ENCODE measurements at regions of chr9 and their contacts with region 1.

Region 1: DNA sequence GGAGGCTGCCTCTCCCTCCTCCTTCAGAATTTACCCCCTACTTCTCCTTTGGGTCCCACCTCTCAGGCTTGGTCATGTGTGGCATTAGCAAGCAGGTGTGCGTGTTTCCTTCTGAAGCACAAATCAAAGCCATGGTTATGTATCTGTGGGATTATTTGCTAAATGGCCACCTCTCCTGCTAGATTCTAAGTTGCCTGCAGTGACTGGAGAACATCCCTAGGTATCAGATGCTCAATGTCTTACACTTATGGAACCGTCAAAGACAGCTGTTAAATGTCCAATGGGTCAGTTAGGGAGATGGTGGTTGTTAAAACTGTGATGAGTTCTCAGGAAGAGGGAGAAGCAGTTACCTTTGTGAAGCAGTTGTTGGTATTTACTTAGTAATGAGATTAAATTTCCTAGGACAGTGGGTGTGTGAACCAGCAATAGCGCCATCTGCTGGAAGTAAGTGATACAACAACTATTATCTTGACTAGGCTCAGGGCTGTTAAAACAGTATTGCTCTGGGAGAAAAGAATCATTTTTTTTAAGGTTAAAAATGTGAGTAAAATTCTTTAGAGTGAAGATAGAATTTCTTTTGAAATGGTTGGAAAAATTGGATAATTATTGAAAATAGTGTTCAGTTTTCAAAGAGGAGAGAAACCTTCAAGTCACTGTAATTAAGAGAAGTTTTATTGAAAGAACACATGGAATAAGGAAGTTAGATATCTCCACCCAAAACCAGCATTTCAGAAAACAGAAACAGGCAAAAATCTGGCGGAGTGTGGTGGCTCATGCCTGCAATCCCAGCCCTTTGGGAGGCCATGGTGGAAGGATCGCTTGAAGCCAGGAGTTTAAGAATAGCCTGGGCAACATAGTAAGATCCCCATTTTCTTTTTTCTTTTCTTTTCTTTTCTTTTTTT is 71.3 kb downstream of the TMC1 start:
- H3K4me3 Mint-ChIP-seq: no peak overlapping the region
- H3K27ac Mint-ChIP-seq: peak overlapping the region; percentile 80
- H3K4me1 Mint-ChIP-seq: peaks cover 64% of the 10 kb centered on the region
- H3K27me3 Mint-ChIP-seq: no peaks in the 10 kb centered on the region

Region 2: GRCh38 chr9:72292256-72292682 is 300.5 kb before region 1 on chr9:
- intact Hi-C with region 1: loop called (anchors 5 kb)
- H3K4me3 Mint-ChIP-seq: peak overlapping the region; percentile 5
- H3K27ac Mint-ChIP-seq: peak overlapping the region; percentile 98
- H3K4me1 Mint-ChIP-seq: peaks cover 57% of the 10 kb centered on the region
- H3K27me3 Mint-ChIP-seq: no peaks in the 10 kb centered on the region

Region 3: DNA sequence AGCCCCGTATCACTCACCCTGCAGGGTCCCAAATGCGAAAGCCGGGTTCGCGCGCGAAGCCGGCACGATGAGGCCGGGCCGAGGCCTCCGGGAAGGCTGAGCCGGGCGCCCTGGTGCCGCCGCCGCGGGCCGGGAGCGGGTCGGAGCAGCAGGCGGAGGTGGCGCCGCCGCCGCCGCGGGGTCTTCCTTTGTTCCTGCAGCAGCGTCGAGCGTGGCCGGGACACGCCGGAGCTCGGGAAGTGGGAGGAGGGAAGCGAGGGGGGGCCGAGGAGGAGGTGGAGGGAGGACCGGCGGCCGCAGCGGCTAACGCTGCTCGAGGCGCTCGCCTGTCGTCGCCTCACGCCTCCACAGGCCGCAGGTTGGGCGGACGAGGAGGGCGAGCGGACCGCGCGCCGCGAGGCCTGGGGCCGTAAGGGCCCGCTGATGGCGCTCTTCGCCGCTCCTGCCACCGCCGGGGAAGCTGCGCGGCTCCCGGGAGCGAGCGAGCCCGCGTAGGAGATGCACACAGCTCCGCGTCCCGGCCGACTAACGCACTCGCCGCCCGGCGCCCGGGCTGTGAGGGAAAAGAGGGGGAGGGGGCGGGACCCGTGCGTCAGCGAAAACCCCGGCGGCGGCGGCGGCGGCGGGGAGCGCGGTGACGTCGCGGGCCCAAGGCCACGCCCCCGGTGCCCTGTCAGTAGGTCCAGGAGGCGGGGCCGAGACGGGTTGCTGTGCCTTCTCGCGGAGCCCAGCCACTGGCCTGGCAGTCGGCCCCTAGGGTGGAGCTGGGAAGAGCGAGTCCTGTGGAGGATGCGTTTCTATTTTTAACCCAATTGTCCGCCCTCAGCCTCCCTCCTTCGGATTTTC is 227.9 kb before region 1 on chr9 and contains the start of gene ZFAND5:
- intact Hi-C with region 1: loop called (anchors 1 kb)
- H3K4me3 Mint-ChIP-seq: peak within 1 kb of the TSS; percentile 76
- H3K27ac Mint-ChIP-seq: peak within 1 kb of the TSS; percentile 97
- H3K4me1 Mint-ChIP-seq: peaks cover 16% of the 10 kb centered on the region
- H3K27me3 Mint-ChIP-seq: no peaks in the 10 kb centered on the region

Region 4: GRCh38 chr9:72526901-72527800 is 65.6 kb before region 1 on chr9:
- intact Hi-C with region 1: loop called (anchors 5 kb)
- H3K4me3 Mint-ChIP-seq: peak overlapping the region; percentile 77
- H3K27ac Mint-ChIP-seq: peak overlapping the region; percentile 99
- H3K4me1 Mint-ChIP-seq: peaks cover 53% of the 10 kb centered on the region
- H3K27me3 Mint-ChIP-seq: no peaks in the 10 kb centered on the region

Region 5: DNA sequence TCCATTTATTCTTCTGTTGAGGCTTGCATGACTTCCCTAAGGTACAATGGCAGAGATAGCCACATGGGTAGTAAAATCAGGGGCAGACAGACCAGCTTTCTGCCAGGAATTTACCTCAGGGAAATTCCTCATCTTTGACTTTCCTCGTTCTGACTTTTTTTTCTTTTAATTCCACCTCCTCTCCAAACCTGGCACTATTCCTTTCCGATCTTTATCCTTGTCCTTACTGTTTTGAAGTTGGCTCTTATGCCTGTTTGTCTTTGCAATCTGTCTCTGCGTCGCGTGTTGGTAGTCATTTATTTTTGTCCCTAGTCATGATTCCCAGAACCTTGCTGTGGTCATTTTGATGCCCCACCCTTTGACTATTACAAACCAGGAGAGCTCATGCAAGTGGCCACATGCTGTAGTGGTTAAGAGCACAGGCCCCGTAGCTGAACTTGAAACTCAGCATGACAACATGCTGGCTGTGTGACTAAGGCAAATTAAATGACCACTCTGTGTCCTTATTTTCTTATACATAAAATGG is 52.3 kb before region 1 on chr9:
- intact Hi-C with region 1: loop called (anchors 5 kb)
- H3K4me3 Mint-ChIP-seq: peak overlapping the region; percentile 21
- H3K27ac Mint-ChIP-seq: peak overlapping the region; percentile 81
- H3K4me1 Mint-ChIP-seq: peaks cover 48% of the 10 kb centered on the region
- H3K27me3 Mint-ChIP-seq: no peaks in the 10 kb centered on the region

Region 6: DNA sequence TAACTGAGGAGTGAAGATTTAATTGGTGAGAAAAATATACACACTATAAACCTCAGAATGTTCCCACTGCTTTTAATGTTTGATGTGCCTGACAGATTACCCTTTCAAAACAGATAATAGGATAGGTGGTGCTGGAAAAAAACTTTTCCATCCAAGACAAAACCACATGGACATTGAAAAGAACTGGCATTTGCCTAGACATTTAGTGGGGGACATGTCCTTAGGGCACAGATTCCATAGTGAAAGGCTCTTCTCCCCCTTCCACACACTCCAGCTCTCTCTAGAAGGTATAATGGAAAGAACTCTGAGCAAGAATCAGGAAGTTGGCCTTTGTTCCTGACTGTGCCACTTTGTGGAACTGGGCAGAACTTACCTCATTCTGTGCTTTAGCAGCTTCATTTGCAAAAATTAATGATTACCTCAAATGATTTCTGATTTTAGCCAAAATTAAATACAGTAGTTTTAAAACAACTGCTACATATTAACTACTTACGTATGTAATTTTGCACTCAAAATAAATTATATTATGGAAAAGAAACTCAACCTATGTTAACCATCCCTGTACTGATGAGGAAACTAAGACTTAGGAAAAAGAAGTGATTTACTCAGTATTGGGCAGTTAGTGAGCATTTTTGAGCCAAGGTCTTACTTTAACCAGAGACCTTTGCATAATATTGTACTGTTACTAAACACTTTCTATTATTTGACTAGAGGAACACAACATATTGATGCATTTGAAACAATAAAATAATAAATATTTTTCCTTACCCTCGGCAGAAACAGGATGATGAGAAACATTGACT is 28.1 kb before region 1 on chr9:
- intact Hi-C with region 1: no loop called
- H3K4me3 Mint-ChIP-seq: no peak overlapping the region
- H3K27ac Mint-ChIP-seq: peak overlapping the region; percentile 40
- H3K4me1 Mint-ChIP-seq: peaks cover 19% of the 10 kb centered on the region
- H3K27me3 Mint-ChIP-seq: no peaks in the 10 kb centered on the region

Region 7: GRCh38 chr9:72827950-72828731 is 235.4 kb after region 1 on chr9:
- intact Hi-C with region 1: loop called (anchors 10 kb)
- H3K4me3 Mint-ChIP-seq: no peak overlapping the region
- H3K27ac Mint-ChIP-seq: no peak overlapping the region
- H3K4me1 Mint-ChIP-seq: peaks cover 11% of the 10 kb centered on the region
- H3K27me3 Mint-ChIP-seq: no peaks in the 10 kb centered on the region